GM10248 (cell line): ENCODE measurements at regions of chr10 and their contacts with region 1.

Region 1: DNA sequence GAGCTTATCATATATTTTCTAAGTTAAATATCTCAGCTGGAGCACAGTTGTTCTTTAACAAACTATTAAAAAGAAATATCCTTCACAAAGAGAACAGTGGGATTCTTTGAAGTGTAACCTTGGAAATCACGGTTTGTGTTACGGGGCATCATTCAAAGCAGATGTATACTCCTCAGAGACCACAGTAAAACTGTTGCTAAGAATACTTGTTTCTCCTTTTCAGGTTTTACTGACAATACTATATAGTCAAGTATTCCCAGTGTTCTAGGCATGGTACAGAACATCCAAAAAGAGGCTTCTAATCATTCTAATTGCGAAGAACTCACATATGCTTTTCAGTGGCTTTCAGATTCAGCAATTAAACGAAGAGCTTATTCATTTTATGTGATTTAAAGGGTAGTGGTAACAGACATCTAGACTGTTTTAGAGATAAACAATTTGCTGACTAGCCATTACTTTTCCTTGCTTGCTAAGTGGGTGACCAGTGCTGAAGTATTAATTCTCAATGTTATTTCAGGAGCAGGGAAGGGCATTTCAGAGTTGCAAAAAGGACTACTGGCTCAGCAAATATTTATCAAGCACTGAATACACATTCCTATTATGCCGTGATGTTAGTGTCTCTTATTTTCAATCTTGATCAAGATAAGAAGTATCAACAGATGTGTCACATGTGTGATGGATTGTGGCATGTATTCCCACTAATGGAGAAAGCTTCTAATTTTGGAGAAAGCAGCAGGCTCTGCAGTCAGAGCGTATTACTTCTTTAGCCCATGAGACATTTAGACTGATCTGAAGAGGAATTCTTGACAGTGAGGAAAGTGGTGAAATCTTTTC is 236.8 kb downstream of the RNLS start:
- DNase-seq: no peak
- CTCF ChIP-seq: no peak

Region 2: DNA sequence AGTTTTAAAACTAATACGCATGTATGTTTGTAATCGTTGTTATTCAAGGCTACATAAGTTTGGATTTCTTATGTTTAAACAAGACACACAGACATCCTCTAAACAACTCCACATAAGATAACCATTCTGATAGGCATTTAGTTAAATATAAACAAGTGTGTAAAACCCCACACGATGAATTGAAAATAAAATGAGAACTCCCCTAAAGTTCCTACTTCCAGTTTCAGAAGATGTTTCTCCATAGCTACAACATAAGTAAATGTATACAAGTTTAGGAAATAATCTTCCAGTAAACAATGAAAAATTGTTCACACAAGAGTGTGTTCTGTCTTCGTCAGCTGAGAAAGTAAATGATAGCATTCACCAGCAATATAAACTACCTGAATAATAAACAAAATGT is 10.0 kb before region 1 on chr10:
- CTCF ChIA-PET with region 1: interaction called, 11 read pairs
- POLR2A ChIA-PET with region 1: no interaction called
- DNase-seq: no peak
- CTCF ChIP-seq: no peak